H1 (cell line): ENCODE measurements at regions of chr1 and their contacts with region 1.

Region 1: DNA sequence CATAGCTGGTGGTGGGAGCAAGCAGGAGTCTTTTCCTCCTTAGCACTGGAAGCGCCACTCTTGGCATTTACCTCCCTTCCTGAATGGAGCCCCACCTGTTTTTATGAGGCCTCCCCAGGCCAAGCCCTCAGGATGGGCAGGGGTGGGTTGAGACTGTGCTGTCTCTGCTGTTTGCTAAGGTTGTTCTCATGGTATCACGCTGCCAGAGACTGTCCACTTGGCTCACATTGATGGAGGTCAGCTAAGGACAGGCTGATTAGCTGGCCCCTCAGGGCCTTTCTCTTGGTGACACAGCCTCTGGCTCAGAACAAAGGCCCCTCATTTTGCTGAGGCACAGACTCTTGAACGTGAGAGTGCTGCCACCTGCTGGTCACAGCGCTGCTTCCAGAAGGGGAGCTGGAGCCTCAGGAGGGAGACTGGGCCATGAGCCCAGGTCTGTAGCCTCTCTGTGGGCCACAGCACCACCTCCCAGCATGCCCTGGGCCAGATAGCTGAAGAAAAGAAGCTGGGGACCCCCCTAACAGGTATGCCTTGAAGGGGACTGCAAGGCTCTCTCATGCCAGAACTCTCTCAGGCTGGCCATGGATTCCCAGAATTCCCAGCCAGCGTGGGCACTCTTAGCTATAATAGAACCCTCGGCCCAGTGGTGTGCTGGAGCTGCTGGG is 85.6 kb downstream of the CD58 start:
- DNase-seq: peak; percentile 70 to 97
- H3K4me3 ChIP-seq: no peak overlapping the region
- H3K27ac ChIP-seq: no peak overlapping the region
- H3K4me1 ChIP-seq: no peaks in the 10 kb centered on the region; a peak in 1 of 7 replicates
- H3K27me3 ChIP-seq: no peaks in the 10 kb centered on the region; a peak in 1 of 7 replicates
- CTCF ChIP-seq: peak; percentile 86 to 94 (median 91)
- EP300 ChIP-seq: no peak
- POLR2A ChIP-seq: no peak
- RAD21 ChIP-seq: peak; percentile 96 to 97

Region 2: DNA sequence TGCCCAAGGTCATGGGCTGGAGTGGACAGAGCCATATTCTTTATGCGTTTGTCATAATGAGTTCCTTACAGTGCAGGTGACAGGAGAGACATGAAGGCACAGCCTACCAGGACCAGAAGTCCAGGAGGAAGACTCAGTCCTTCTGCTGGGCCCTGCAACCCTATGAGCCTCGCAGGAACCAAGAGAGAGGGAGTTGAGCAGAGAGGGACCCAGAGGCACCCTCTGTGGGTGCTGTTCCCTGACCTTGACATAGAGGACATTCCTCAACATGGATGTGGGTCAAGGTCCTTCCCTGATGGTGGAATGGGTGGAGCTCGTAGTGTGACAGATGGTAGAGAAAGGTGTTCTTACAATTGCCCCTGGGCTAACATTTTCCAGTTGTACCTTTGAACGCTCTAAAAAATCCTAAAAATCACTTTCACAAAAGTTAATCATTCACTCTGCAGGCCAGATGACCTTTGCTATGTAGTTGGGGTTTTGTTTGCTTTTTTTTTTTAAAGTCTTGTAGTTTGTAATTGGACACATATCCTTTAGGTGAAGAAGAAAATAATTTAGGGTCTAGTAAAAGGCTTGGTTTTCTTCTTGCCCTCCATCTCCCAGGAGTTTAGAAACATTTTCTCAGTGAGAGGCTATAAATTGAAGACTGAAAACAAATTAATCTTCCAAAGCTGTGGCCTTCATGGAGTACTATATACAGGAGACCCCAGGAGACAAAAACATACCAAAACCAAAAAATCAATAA is 332.1 kb before region 1 on chr1:
- CTCF ChIA-PET with region 1: interaction called, 15 read pairs
- POLR2A ChIA-PET with region 1: interaction called, 3 read pairs
- DNase-seq: no peak
- H3K4me3 ChIP-seq: no peak overlapping the region
- H3K27ac ChIP-seq: no peak overlapping the region
- H3K4me1 ChIP-seq: 0 out of 7 replicates have a peak, but pooled peaks cover 0 to 2% (median 0%) of the 10 kb centered on the region in 4 experiments
- H3K27me3 ChIP-seq: peaks cover 0 to 6% (median 5%) of the 10 kb centered on the region in 4 experiments; a peak in 4 of 7 replicates
- CTCF ChIP-seq: no peak
- EP300 ChIP-seq: no peak
- POLR2A ChIP-seq: no peak
- RAD21 ChIP-seq: no peak

Region 3: DNA sequence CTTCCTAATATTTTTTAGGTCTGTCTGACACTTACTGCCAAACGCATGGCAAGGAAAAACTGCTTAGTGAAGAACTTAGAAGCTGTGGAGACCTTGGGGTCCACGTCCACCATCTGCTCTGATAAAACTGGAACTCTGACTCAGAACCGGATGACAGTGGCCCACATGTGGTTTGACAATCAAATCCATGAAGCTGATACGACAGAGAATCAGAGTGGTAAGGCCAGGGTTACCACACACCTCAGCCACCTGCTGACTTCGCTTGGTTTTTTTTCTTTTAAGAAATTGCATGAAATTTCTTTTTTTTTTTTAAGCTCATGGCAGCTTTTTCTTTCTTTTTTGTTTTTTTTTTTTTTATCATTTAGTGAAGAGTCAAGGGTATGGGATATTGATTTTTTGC is 95.0 kb before region 1 on chr1:
- CTCF ChIA-PET with region 1: interaction called, 19 read pairs
- POLR2A ChIA-PET with region 1: no interaction called
- DNase-seq: no peak
- H3K4me3 ChIP-seq: no peak overlapping the region
- H3K27ac ChIP-seq: no peak overlapping the region
- H3K4me1 ChIP-seq: no peaks in the 10 kb centered on the region
- H3K27me3 ChIP-seq: peaks cover 0 to 1% (median 0%) of the 10 kb centered on the region in 4 experiments; a peak in 1 of 7 replicates
- CTCF ChIP-seq: no peak
- EP300 ChIP-seq: no peak
- POLR2A ChIP-seq: no peak
- RAD21 ChIP-seq: no peak

Region 4: DNA sequence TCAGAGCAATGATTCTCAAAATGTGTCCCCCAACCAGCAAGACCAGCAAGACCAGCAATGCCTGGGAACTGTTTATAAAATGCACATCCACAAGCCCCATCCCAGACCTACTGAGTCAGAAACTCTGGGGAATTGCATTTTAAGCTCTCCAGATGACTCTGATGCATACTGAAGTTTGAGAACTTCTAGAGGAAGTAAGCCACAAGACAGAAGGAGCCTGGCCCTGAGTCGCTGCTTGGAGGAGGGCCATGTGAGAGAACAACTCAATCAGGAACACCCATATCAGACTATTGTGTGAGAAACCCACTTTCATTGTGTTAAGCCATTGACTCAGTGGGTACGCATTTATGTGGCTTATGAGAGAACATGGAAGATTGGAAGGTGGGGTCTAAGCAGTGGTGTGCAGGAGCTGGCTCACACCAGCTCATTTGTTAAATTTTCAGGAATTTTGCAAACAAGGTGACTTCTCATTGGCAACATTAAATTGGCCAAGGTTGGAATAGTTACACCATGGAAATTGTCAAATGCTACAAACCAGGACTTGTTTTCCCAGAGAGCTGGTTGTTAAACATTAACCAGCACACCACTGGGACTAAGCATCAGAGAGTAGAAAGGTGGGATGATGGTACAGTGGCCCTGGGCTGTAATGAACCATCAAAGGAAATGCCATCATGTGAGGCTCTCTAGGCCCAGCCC is 73.3 kb before region 1 on chr1:
- CTCF ChIA-PET with region 1: interaction called, 85 read pairs
- POLR2A ChIA-PET with region 1: interaction called, 8 read pairs
- DNase-seq: no peak
- H3K4me3 ChIP-seq: no peak overlapping the region
- H3K27ac ChIP-seq: no peak overlapping the region
- H3K4me1 ChIP-seq: peaks cover 0 to 6% (median 4%) of the 10 kb centered on the region in 4 experiments; a peak in 4 of 7 replicates
- H3K27me3 ChIP-seq: no peaks in the 10 kb centered on the region
- CTCF ChIP-seq: no peak
- EP300 ChIP-seq: no peak
- POLR2A ChIP-seq: no peak
- RAD21 ChIP-seq: no peak

Region 5: DNA sequence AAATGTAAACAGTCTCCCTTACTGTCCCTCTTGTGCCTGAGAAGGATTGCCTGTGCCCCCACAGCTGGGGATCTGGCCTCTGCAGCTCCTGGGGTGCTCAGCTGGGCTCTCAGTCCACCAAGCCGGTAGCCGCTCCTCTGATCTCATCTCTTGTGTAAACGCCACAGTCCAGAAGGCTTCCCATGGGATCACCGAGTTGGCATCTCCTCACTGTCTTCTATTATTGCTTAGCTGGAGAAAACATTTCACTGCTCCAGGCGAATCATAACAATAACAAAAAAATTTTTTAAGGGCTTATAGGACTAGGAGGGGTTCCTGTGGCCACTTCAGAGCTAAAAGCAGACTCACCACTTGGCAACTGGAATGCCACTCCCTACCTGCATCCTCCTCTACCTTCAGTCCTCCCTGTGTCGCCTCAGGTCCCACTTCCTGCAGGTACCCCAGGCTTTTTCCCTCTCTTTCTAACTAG is 36.4 kb before region 1 on chr1:
- CTCF ChIA-PET with region 1: interaction called, 13 read pairs
- POLR2A ChIA-PET with region 1: no interaction called
- DNase-seq: no peak
- H3K4me3 ChIP-seq: no peak overlapping the region
- H3K27ac ChIP-seq: no peak overlapping the region
- H3K4me1 ChIP-seq: peaks cover 0 to 1% (median under 1%) of the 10 kb centered on the region in 4 experiments; a peak in 2 of 7 replicates
- H3K27me3 ChIP-seq: no peaks in the 10 kb centered on the region
- CTCF ChIP-seq: no peak
- EP300 ChIP-seq: no peak
- POLR2A ChIP-seq: no peak
- RAD21 ChIP-seq: no peak

Region 6: DNA sequence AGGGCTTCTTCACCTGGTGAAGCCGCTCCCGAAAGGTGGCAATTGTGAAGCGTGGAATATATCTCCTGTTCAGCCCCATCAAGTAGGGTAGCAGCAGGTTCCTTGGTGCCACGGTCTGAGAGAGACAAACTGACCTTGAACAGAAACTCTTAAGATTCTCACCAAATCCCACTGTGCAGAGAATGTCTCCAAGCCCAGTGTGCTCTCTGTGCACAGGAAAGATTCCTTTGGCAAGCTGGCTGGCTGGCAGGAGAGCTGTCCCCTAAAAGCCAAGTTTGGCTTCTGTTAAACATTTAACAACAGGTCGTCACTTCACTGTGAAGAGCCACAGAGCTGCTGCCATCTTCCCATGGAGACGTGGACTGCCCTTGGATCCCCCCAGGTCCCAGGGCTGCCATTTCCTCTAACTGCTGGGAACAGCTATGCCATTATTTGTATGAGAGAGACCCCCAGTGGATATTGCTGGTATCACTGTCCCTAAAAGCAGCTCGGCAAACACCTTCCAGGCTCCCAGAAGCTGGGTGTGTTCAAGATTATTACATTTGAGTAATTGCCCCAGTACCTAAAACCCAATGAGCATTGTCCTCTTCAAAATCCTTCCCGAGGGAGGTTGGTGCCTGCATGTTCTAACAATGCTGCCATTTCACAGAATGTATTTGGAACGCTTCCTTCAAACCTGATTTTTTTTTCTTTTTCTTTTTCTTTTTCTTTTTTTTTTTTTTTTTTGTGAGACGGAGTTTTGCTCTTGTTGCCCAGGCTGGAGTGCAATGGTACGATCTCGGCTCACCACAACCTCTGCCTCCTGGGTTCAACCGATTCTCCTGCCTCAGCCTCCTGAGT is 13.8 kb after region 1 on chr1:
- CTCF ChIA-PET with region 1: interaction called, 116 read pairs
- POLR2A ChIA-PET with region 1: no interaction called
- DNase-seq: peak; percentile 34 to 77
- H3K4me3 ChIP-seq: no peak overlapping the region
- H3K27ac ChIP-seq: no peak overlapping the region
- H3K4me1 ChIP-seq: no peaks in the 10 kb centered on the region; a peak in 1 of 7 replicates
- H3K27me3 ChIP-seq: no peaks in the 10 kb centered on the region
- CTCF ChIP-seq: peak; percentile 33 to 81 (median 78)
- EP300 ChIP-seq: no peak
- POLR2A ChIP-seq: no peak
- RAD21 ChIP-seq: peak; percentile 97

Region 7: GRCh38 chr1:116556289-116557006 is 71.2 kb after region 1 on chr1:
- CTCF ChIA-PET with region 1: no interaction called
- POLR2A ChIA-PET with region 1: no interaction called
- DNase-seq: no peak
- H3K4me3 ChIP-seq: no peak overlapping the region
- H3K27ac ChIP-seq: no peak overlapping the region
- H3K4me1 ChIP-seq: peaks cover 0 to 7% (median 3%) of the 10 kb centered on the region in 4 experiments; a peak in 3 of 7 replicates
- H3K27me3 ChIP-seq: no peaks in the 10 kb centered on the region
- CTCF ChIP-seq: no peak
- EP300 ChIP-seq: no peak
- POLR2A ChIP-seq: no peak
- RAD21 ChIP-seq: no peak

Region 8: GRCh38 chr1:116605315-116605714 is 120.1 kb after region 1 on chr1:
- CTCF ChIA-PET with region 1: no interaction called
- POLR2A ChIA-PET with region 1: no interaction called
- DNase-seq: no peak
- H3K4me3 ChIP-seq: no peak overlapping the region
- H3K27ac ChIP-seq: no peak overlapping the region
- H3K4me1 ChIP-seq: peaks cover 0 to 5% (median 2%) of the 10 kb centered on the region in 4 experiments; a peak in 2 of 7 replicates
- H3K27me3 ChIP-seq: no peaks in the 10 kb centered on the region
- CTCF ChIP-seq: no peak
- EP300 ChIP-seq: no peak
- POLR2A ChIP-seq: no peak
- RAD21 ChIP-seq: no peak